ENCODE measurements at regions of chrX and their contacts with region 1.

Region 1: DNA sequence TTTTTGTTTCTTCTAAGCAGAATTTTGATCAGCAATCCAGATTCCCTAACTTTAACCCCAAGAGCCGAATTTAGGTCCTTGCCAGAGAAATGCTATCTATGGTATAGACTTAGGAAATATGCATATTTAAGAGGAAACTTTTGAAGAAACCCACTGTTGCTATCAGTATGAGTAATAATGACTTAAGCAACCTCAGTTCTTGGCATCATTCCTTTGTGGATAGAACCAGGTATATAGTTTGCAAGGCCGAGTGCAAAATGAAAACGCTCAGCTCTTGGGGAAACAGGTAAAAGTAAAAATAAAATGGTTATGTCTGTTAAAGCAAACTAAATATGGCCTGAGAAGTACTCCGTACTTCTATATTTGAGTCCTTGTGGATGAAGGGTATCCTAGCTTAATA is 78.1 kb downstream of the ARSF start:
- DNase-seq: no peak
- H3K4me3 ChIP-seq: no peak overlapping the region
- H3K27ac ChIP-seq: no peak overlapping the region
- H3K4me1 ChIP-seq: no peaks in the 10 kb centered on the region
- H3K27me3 ChIP-seq: no peaks in the 10 kb centered on the region
- CTCF ChIP-seq: no peak
- EP300 ChIP-seq: no peak
- POLR2A ChIP-seq: no peak

Region 2: GRCh38 chrX:3548765-3549391 is 429.5 kb after region 1 on chrX:
- intact Hi-C with region 1: loop called (anchors 5 kb)
- DNase-seq: no peak
- H3K4me3 ChIP-seq: peak overlapping the region in 1 of 4 donors; percentile 15
- H3K27ac ChIP-seq: no peak overlapping the region
- H3K4me1 ChIP-seq: no peaks in the 10 kb centered on the region
- H3K27me3 ChIP-seq: peaks cover 0 to 3% (median 0%) of the 10 kb centered on the region in 3 donors
- CTCF ChIP-seq: no peak
- EP300 ChIP-seq: no peak
- POLR2A ChIP-seq: no peak